Naive thymus-derived CD4-positive, alpha-beta T cell (primary cell): ENCODE measurements at regions of chr11 and their contacts with region 1.

Region 1: DNA sequence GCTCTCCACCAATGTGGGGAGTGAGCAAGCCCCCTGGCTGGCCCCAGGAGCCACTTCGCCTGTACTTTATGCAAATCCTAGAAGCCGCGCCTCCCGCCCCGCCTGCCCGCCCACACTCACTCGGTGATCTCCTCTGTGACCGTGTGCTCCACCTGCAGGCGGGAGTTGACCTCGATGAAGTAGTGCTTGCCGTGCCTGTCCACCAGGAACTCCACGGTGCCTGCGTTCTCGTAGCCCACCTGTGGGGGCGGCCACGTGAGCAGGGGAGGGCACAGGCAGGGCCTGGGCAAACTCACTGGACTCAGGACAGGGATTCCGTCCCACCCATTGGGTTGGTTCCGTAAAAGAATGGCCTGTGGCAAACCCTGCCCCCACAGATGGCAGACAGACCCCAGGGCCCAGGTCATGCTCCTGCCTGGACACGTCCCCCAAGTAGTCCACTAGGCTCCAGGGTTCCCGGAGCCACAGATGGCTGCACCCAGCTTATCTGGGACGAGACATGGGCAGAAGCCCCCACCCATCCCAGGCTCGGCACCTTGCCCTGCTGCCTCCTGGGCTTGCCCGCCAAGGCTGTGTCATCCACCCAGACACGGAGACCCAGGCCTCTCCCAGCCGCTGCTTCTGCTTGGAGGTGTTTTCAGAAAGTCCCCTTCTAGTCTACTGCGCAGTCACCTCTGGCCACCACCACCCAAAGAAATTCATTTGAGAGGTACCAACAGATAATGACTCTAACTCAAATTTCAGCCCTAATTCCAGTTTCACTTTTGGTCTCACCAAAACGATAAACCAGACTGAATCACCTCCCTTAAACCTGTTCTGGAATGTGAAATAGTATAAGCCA is 12.1 kb downstream of the LRFN4 start:
- DNase-seq: peak; percentile 42 to 76 (median 63)
- ATAC-seq: peak; percentile 97
- H3K4me3 ChIP-seq: no peak overlapping the region
- H3K4me3 Mint-ChIP-seq: peak overlapping the region in 2 of 10 donors; percentile 25 to 28
- H3K27ac ChIP-seq: no peak overlapping the region
- H3K27ac Mint-ChIP-seq: peak overlapping the region in 1 of 9 donors; percentile 9
- H3K4me1 ChIP-seq: peaks cover 0 to 7% of the 10 kb centered on the region in 2 donors
- H3K4me1 Mint-ChIP-seq: peaks cover 0 to 13% (median 5%) of the 10 kb centered on the region in 7 donors
- H3K27me3 ChIP-seq: no peaks in the 10 kb centered on the region
- H3K27me3 Mint-ChIP-seq: no peaks in the 10 kb centered on the region

Region 2: DNA sequence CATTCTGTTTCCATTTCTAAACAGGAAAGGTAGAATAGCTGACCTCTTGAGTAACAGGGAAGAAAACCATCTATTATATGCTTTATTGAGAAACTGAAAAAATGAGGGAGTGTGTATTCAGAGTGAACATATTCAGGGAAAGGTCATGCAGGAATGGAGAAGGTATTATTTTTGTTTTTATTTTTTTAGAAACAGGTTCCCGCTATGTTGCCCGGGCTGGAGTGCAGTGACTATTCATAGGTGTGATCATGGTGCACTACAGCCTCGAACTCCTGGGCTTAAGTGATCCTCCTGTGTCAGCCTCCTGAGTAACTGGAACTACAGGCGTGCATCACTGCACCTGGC is 34.5 kb before region 1 on chr11:
- CTCF ChIA-PET with region 1: no interaction called
- POLR2A ChIA-PET with region 1: no interaction called
- intact Hi-C with region 1: loop called in 1 of 2 experiments (anchors 1 kb)
- DNase-seq: no peak
- ATAC-seq: no peak
- H3K4me3 ChIP-seq: no peak overlapping the region
- H3K4me3 Mint-ChIP-seq: no peak overlapping the region
- H3K27ac ChIP-seq: peak overlapping the region; percentile 6
- H3K27ac Mint-ChIP-seq: peak overlapping the region in 8 of 9 donors; percentile 22 to 92 (median 62)
- H3K4me1 ChIP-seq: peaks cover 3 to 6% of the 10 kb centered on the region in 2 donors
- H3K4me1 Mint-ChIP-seq: peaks cover 0 to 23% (median 18%) of the 10 kb centered on the region in 7 donors
- H3K27me3 ChIP-seq: no peaks in the 10 kb centered on the region
- H3K27me3 Mint-ChIP-seq: no peaks in the 10 kb centered on the region

Region 3: GRCh38 chr11:66855574-66856495 is 13.1 kb before region 1 on chr11:
- CTCF ChIA-PET with region 1: no interaction called
- POLR2A ChIA-PET with region 1: interaction called, 3 read pairs
- intact Hi-C with region 1: loop called in 1 of 2 experiments (anchors 1 kb)
- DNase-seq: peak in 3 of 9 donors; percentile 17 to 91 (median 55)
- ATAC-seq: peak; percentile 85
- H3K4me3 ChIP-seq: peak overlapping the region; percentile 71
- H3K4me3 Mint-ChIP-seq: peak overlapping the region; percentile 71 to 89 (median 85)
- H3K27ac ChIP-seq: peak overlapping the region; percentile 14
- H3K27ac Mint-ChIP-seq: peak overlapping the region in 6 of 9 donors; percentile 28 to 90 (median 54)
- H3K4me1 ChIP-seq: peaks cover 0 to 6% of the 10 kb centered on the region in 2 donors
- H3K4me1 Mint-ChIP-seq: peaks cover 0 to 26% (median 9%) of the 10 kb centered on the region in 7 donors
- H3K27me3 ChIP-seq: no peaks in the 10 kb centered on the region
- H3K27me3 Mint-ChIP-seq: no peaks in the 10 kb centered on the region